Sciatic nerve (tissue), 2 donors: ENCODE measurements at regions of chr17 and their contacts with region 1.

Region 1: GRCh38 chr17:19447085-19447583 is 36.1 kb downstream of the RNF112 start:
- DNase-seq: peak; percentile 83
- ATAC-seq: peak; percentile 78

Region 2: GRCh38 chr17:19362277-19363113 is 84.6 kb before region 1 on chr17 and contains the start of gene B9D1:
- intact Hi-C with region 1: loop called (anchors 5 kb)
- DNase-seq: peak; percentile 97
- ATAC-seq: peak; percentile 97
- total RNA-seq, gene B9D1: 19.8 TPM

Region 3: GRCh38 chr17:20562587-20562986 is 1115.5 kb after region 1 on chr17:
- intact Hi-C with region 1: no loop called
- DNase-seq: no peak
- ATAC-seq: no peak